Endothelial cell of umbilical vein (primary cell): ENCODE measurements at regions of chr6 and their contacts with region 1.

Region 1: DNA sequence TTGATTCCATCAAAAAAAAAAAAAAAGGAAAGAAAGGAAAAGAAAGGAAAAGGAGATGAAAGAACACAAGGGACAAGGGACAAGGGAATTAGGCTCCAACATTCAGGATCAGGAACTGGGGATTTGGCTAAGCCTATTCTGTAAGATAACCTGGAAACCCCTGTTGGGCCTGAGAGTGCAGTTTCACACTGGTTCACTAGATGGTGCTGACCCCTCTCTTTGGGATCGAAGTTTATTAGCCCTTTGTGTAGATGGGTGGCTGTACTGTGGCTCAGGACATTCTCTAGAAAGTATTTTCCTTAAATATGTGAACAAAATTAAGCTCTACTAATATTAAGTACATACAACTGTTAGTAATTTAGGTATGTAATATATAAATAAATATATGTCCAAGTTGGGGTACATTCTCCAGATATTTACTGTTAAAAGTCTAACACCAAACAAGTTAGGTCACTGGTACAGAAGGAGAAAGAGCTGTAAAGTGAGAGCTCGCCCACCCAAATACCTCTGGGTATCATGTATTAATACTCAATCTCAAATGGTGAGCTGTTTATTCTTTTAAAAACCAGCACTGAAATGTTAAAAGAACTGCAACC is 6.3 kb downstream of the OR2A4 start:
- DNase-seq: peak; percentile 74
- H3K4me3 ChIP-seq: no peak overlapping the region
- H3K27ac ChIP-seq: no peak overlapping the region
- H3K4me1 ChIP-seq: no peaks in the 10 kb centered on the region
- H3K27me3 ChIP-seq: no peaks in the 10 kb centered on the region
- CTCF ChIP-seq: peak; percentile 79 to 80
- POLR2A ChIP-seq: no peak

Region 2: GRCh38 chr6:131574133-131574532 is 120.8 kb before region 1 on chr6:
- CTCF ChIA-PET with region 1: no interaction called
- POLR2A ChIA-PET with region 1: no interaction called
- dilution Hi-C with region 1: no loop called
- intact Hi-C with region 1: no loop called
- DNase-seq: no peak
- H3K4me3 ChIP-seq: no peak overlapping the region
- H3K27ac ChIP-seq: no peak overlapping the region
- H3K4me1 ChIP-seq: no peaks in the 10 kb centered on the region
- H3K27me3 ChIP-seq: no peaks in the 10 kb centered on the region
- CTCF ChIP-seq: no peak
- POLR2A ChIP-seq: no peak

Region 3: GRCh38 chr6:131728296-131728939 is 33.5 kb after region 1 on chr6:
- CTCF ChIA-PET with region 1: interaction called, 15 read pairs
- POLR2A ChIA-PET with region 1: no interaction called
- dilution Hi-C with region 1: no loop called
- intact Hi-C with region 1: no loop called
- DNase-seq: no peak
- H3K4me3 ChIP-seq: no peak overlapping the region
- H3K27ac ChIP-seq: no peak overlapping the region
- H3K4me1 ChIP-seq: no peaks in the 10 kb centered on the region
- H3K27me3 ChIP-seq: no peaks in the 10 kb centered on the region
- CTCF ChIP-seq: no peak
- POLR2A ChIP-seq: no peak

Region 4: GRCh38 chr6:131765081-131765803 is 70.3 kb after region 1 on chr6:
- CTCF ChIA-PET with region 1: no interaction called
- POLR2A ChIA-PET with region 1: no interaction called
- dilution Hi-C with region 1: no loop called
- intact Hi-C with region 1: no loop called
- DNase-seq: no peak
- H3K4me3 ChIP-seq: no peak overlapping the region
- H3K27ac ChIP-seq: no peak overlapping the region
- H3K4me1 ChIP-seq: no peaks in the 10 kb centered on the region
- H3K27me3 ChIP-seq: peaks cover 2 to 3% of the 10 kb centered on the region in 2 experiments
- CTCF ChIP-seq: no peak
- POLR2A ChIP-seq: no peak

Region 5: GRCh38 chr6:131782764-131783163 is 87.8 kb after region 1 on chr6:
- CTCF ChIA-PET with region 1: interaction called, 18 read pairs
- POLR2A ChIA-PET with region 1: no interaction called
- dilution Hi-C with region 1: no loop called
- intact Hi-C with region 1: no loop called
- DNase-seq: no peak
- H3K4me3 ChIP-seq: no peak overlapping the region
- H3K27ac ChIP-seq: no peak overlapping the region
- H3K4me1 ChIP-seq: no peaks in the 10 kb centered on the region
- H3K27me3 ChIP-seq: peaks cover 3 to 7% of the 10 kb centered on the region in 2 experiments
- CTCF ChIP-seq: no peak
- POLR2A ChIP-seq: no peak

Region 6: DNA sequence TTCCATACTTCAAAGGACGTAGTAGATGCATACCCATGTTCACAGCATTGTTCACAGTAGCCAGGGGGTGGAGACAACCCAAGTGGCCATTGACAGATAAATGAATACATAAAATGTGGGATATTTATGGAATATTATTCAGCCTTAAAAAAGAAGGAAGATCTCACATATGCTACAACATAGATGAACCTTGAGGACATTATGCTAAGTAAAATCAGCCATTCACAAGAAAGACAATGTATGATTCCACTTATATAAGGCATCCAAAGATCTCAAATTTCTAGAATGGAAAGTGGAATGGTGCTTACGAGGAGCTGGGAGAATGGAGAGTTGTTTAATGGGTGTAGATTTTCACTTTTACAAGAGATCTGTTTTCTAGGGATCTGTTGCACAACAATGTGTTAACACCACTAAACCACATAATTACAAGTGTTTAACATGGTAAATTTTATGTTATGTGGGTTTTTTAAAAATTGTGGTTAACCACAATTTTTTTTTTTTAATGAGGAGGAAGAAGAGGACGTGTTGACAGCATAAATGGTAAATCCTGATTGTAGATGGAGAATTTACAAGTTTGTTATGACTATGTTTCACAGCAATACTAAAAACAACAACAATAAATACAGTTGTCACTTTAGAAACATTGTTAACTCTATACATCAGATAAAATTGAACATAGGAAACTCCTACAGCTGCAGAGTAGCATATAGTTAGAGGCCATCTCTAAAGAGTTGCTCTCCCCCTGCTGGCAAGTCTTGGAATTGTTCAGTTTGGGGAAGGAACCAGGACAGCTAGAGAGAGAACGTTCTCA is 214.7 kb after region 1 on chr6:
- CTCF ChIA-PET with region 1: interaction called, 275 read pairs
- POLR2A ChIA-PET with region 1: no interaction called
- dilution Hi-C with region 1: no loop called
- intact Hi-C with region 1: loop called (anchors 1 kb)
- DNase-seq: peak; percentile 74
- H3K4me3 ChIP-seq: no peak overlapping the region
- H3K27ac ChIP-seq: no peak overlapping the region
- H3K4me1 ChIP-seq: no peaks in the 10 kb centered on the region
- H3K27me3 ChIP-seq: peaks cover 0 to 7% of the 10 kb centered on the region in 2 experiments
- CTCF ChIP-seq: peak; percentile 63 to 69
- POLR2A ChIP-seq: no peak

Region 7: GRCh38 chr6:131914967-131915751 is 220.2 kb after region 1 on chr6:
- CTCF ChIA-PET with region 1: interaction called, 275 read pairs
- POLR2A ChIA-PET with region 1: no interaction called
- dilution Hi-C with region 1: no loop called
- intact Hi-C with region 1: loop called (anchors 1 kb)
- DNase-seq: peak; percentile 79
- H3K4me3 ChIP-seq: no peak overlapping the region
- H3K27ac ChIP-seq: no peak overlapping the region
- H3K4me1 ChIP-seq: peaks cover 2% of the 10 kb centered on the region
- H3K27me3 ChIP-seq: peaks cover 0 to 3% of the 10 kb centered on the region in 2 experiments
- CTCF ChIP-seq: peak; percentile 73 to 76
- POLR2A ChIP-seq: no peak